ENCODE measurements at regions of chr5 and their contacts with region 1.

Region 1: GRCh38 chr5:65047948-65048690 is 279.4 kb downstream of the CWC27 start:
- DNase-seq: no peak
- H3K4me3 ChIP-seq: peak overlapping the region; percentile 31
- H3K27ac ChIP-seq: peak overlapping the region; percentile 49
- H3K4me1 ChIP-seq: peaks cover 72% of the 10 kb centered on the region
- CTCF ChIP-seq: no peak

Region 2: DNA sequence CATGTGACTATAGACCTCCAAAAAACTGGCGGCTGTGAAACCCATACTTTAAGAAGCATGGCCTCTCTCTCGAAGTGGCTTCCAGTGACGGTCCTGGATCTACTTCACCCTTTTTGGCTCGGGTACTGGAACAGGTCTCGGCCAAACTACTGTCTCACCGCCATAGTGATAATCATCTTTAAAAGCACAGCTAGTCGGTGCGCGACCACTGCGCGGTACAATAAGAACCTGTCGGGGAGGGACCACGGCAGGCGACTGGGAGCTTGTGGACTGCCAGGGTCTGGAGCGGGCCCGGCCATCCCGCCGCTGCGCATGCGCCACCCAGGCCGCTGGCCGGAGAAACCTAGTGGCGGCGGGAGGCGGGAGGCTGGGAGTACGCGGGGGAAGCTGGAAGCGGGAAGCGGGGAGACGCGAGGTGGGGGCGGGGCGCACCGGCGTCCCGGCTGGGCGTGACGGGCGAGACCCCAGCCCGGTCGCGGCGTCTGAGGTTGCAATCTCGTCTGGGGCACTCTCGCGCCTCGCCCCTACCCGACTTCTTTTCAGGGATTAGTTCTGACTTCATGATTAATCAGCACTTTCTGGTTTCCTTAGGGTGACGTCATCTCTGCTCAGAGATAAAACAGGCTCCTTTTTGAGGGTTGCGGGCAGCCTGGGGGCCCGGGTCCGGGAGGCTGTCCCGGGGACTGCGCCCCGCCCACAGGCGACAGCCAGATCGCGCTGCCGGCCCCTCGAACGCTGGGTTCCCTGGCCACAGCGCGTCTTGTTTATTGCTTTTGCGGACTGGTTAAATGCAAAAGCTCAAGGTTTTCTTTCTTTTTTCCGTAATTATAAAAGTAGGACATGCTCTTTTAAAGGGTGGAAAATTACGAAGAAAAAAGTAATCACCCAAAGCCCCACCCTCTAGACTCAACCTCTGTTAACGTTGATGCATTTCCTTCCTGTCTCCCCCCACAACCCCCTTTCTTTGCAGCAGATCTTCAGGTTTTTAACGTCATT is 12.6 kb before region 1 on chr5:
- CTCF ChIA-PET with region 1: interaction called, 4 read pairs
- POLR2A ChIA-PET with region 1: interaction called, 49 read pairs
- intact Hi-C with region 1: no loop called
- DNase-seq: peak; percentile 76
- H3K4me3 ChIP-seq: peak overlapping the region; percentile 66
- H3K27ac ChIP-seq: peak overlapping the region; percentile 80
- H3K4me1 ChIP-seq: peaks cover 63% of the 10 kb centered on the region
- CTCF ChIP-seq: peak; percentile 29; the same call in 1 of the 2 replicates

Region 3: DNA sequence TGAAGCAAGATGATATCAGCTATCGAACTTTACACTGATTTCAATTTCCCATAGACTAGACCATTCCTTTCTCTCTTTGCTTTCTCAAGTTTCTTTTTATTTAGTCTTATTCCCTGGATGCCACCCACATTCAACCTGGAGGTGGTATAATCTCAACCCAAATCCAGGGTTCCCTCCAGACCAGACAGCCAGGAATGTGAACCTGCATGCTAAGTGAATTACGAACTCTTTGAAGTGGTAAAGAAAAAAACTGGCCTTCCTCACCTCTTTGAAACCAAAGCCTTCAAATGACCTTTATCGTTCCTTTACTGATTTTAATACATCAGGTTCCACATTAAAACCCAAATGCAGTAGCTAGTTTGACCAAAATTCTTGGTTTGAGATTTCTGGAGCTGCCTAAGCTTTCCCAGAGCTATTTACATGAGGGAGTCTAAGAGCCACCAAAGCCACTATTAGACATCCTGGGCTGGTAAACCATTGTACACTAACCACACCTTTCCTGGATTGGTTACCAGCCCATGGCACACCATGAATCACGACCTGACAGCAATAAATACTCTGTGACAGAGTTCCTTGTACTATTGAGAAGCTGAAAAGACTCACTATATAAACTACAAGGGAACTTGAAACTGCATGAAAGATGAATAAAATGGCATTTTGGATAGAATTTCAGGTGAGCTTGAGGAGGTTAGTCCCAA is 109.9 kb after region 1 on chr5:
- CTCF ChIA-PET with region 1: no interaction called
- POLR2A ChIA-PET with region 1: no interaction called
- intact Hi-C with region 1: no loop called
- DNase-seq: no peak
- H3K4me3 ChIP-seq: no peak overlapping the region
- H3K27ac ChIP-seq: no peak overlapping the region
- H3K4me1 ChIP-seq: no peaks in the 10 kb centered on the region
- CTCF ChIP-seq: no peak

Region 4: DNA sequence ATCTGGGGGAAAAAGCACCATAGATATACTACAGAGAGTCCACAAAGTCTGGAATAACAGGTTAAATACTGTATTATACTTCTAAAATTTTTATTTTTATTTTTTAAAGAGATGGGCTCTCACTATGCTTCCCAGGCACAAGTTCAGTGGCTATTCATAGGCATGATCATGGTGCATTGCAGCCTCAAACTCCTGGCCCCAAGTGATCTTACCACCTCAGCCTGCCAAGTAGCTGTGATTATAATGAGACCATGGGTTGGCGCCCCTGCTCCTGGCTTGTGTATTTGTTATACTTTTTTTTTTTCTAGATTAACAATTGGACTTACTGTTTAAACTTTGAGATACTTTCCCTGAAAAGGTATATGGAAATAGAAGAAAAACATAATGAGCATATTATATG is 904.1 kb after region 1 on chr5:
- CTCF ChIA-PET with region 1: no interaction called
- POLR2A ChIA-PET with region 1: no interaction called
- intact Hi-C with region 1: loop called (anchors 5 kb)
- DNase-seq: no peak
- H3K4me3 ChIP-seq: no peak overlapping the region
- H3K27ac ChIP-seq: no peak overlapping the region
- H3K4me1 ChIP-seq: no peaks in the 10 kb centered on the region
- CTCF ChIP-seq: no peak